ENCODE measurements at regions of chr5 and their contacts with region 1.

Region 1: GRCh38 chr5:55102348-55102747 is at the start of gene GZMA:
- DNase-seq: peak; percentile 36
- H3K4me3 Mint-ChIP-seq: peak within 1 kb of the TSS; percentile 85
- H3K27ac Mint-ChIP-seq: peak within 1 kb of the TSS; percentile 93
- H3K4me1 Mint-ChIP-seq: peaks cover 87% of the 10 kb centered on the region
- H3K27me3 Mint-ChIP-seq: no peaks in the 10 kb centered on the region
- total RNA-seq, gene GZMA: 88.1 and 93.7 TPM in 2 replicates

Region 2: GRCh38 chr5:54927097-54927746 is 175.1 kb before region 1 on chr5:
- intact Hi-C with region 1: loop called (anchors 2 kb)
- DNase-seq: no peak
- H3K4me3 Mint-ChIP-seq: no peak overlapping the region
- H3K27ac Mint-ChIP-seq: peak overlapping the region; percentile 3
- H3K4me1 Mint-ChIP-seq: peaks cover 8% of the 10 kb centered on the region
- H3K27me3 Mint-ChIP-seq: peaks cover 14% of the 10 kb centered on the region

Region 3: DNA sequence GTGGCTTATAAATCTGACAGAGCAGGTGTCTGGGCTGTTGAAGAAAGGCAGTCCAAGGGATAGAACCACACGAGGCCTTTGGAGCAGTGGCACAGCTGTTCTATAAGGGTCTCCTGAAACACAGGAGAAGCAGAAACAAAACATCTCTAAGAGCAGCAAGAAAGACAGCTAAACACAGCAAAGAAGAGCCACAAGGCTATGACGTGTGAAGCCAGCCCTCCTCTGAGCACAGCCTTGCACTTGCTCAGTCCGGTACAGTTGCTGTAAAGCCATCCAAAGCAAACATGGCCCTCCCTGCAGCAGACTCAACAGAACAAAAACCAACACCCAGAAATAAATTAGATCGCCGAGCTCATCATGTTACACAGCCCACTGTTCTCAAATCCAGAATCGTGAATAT is 80.9 kb before region 1 on chr5:
- intact Hi-C with region 1: loop called (anchors 1 kb)
- DNase-seq: no peak
- H3K4me3 Mint-ChIP-seq: no peak overlapping the region
- H3K27ac Mint-ChIP-seq: no peak overlapping the region
- H3K4me1 Mint-ChIP-seq: peaks cover 52% of the 10 kb centered on the region
- H3K27me3 Mint-ChIP-seq: no peaks in the 10 kb centered on the region

Region 4: GRCh38 chr5:55072666-55073065 is 29.7 kb before region 1 on chr5:
- intact Hi-C with region 1: loop called (anchors 1 kb)
- DNase-seq: peak; percentile 31
- H3K4me3 Mint-ChIP-seq: peak overlapping the region; percentile 57
- H3K27ac Mint-ChIP-seq: peak overlapping the region; percentile 88
- H3K4me1 Mint-ChIP-seq: peaks cover 53% of the 10 kb centered on the region
- H3K27me3 Mint-ChIP-seq: no peaks in the 10 kb centered on the region

Region 5: DNA sequence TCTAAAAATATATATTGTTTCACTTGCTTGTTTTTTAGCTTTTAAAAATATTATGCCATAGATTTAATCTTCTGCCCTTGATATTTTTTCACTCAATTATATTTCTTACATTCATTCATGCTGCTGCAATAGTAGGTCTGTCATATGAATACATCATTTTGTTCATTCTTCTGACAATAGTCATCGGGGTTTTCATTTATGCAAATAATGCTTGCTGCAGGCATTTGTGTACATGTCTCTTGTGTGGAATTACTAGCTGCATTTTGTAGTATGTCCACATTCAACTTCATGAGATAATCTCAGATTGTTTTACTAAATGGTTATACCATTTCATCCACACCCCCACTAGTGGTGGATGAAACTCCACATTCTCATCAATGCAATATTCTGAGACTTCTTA is 437.7 kb after region 1 on chr5:
- intact Hi-C with region 1: no loop called
- DNase-seq: no peak
- H3K4me3 Mint-ChIP-seq: no peak overlapping the region
- H3K27ac Mint-ChIP-seq: no peak overlapping the region
- H3K4me1 Mint-ChIP-seq: peaks cover 44% of the 10 kb centered on the region
- H3K27me3 Mint-ChIP-seq: peaks cover 4% of the 10 kb centered on the region

Measured in activated T-helper 1 cell treated with anti-CD3 and anti-CD28 coated beads, Interleukin-12 subunit alpha, Interleukin-12 subunit beta, Interleukin-2, Interleukin-4 antibody, amounts not matched to agents 30 ng/mL and 10 ng/mL and 1 ng/mL, durations not matched to agents 14 hours and 24 hours and 36 hours (primary cell).